ENCODE measurements at regions of chr19 and their contacts with region 1.

Region 1: GRCh38 chr19:20051841-20052768 is 12.8 kb upstream of the ZNF682 start:
- DNase-seq: peak; percentile 83
- ATAC-seq: peak; percentile 96
- H3K4me3 Mint-ChIP-seq: peak overlapping the region; percentile 93
- H3K27ac Mint-ChIP-seq: peak overlapping the region; percentile 93
- H3K4me1 Mint-ChIP-seq: peaks cover 6% of the 10 kb centered on the region
- H3K27me3 Mint-ChIP-seq: no peaks in the 10 kb centered on the region
- CTCF ChIP-seq: no peak

Region 2: DNA sequence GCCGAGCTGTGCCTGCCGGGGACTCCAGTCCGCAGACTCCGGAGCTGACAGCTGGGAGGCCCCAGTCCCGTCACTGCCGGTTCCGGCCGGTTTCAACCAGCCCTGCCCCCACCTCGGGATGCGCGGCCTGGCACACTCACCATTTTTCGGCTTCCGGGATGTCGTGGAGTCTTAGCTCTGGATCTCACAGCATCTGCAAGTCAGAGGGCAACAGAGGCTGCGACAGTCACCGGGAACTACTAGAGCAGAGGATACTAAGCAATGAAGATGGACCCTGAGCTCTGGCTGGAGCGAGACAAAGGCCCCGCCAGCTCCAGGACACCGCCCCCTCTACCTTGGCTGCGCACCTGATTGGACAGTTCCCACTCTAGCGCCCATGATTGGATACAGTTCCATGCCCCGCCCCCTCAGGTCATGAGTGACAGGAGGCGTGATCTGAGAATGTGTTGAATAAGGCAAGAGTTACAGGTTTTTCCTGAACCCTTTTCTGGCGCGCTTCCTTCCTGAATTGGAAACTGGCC is 12.8 kb before region 1 on chr19 and contains the start of gene ZNF682:
- CTCF ChIA-PET with region 1: interaction called, 4 read pairs
- POLR2A ChIA-PET with region 1: interaction called, 12 read pairs
- intact Hi-C with region 1: no loop called
- DNase-seq: peak; percentile 99
- ATAC-seq: peak; percentile 100
- H3K4me3 Mint-ChIP-seq: peak within 1 kb of the TSS; percentile 94
- H3K27ac Mint-ChIP-seq: peak within 1 kb of the TSS; percentile 98
- H3K4me1 Mint-ChIP-seq: peaks cover 15% of the 10 kb centered on the region
- H3K27me3 Mint-ChIP-seq: no peaks in the 10 kb centered on the region
- CTCF ChIP-seq: no peak
- total RNA-seq, gene ZNF682: 8.9 to 12.2 TPM

Measured in activated CD8-positive, alpha-beta T cell treated with anti-CD3 and anti-CD28 coated beads for 36 hours (primary cell).